A549 (cell line): ENCODE measurements at regions of chr5 and their contacts with region 1.

Region 1: GRCh38 chr5:140346348-140347101 is at the start of gene HBEGF:
- DNase-seq: peak; percentile 69 to 85
- ATAC-seq: peak; percentile 78 to 91
- H3K4me3 ChIP-seq: peak within 1 kb of the TSS; percentile 75
- H3K27ac ChIP-seq: peak within 1 kb of the TSS; percentile 74 to 88
- H3K4me1 ChIP-seq: peaks cover 22% of the 10 kb centered on the region
- CTCF ChIP-seq: no peak; the same call in none of the 3 replicates
- EP300 ChIP-seq: no peak
- POLR2A ChIP-seq: peak; percentile 95
- RAD21 ChIP-seq: no peak; a peak in 2 of 5 replicates
- polyA plus RNA-seq, gene HBEGF: 4.2 and 5.0 TPM in 2 replicates

Region 2: DNA sequence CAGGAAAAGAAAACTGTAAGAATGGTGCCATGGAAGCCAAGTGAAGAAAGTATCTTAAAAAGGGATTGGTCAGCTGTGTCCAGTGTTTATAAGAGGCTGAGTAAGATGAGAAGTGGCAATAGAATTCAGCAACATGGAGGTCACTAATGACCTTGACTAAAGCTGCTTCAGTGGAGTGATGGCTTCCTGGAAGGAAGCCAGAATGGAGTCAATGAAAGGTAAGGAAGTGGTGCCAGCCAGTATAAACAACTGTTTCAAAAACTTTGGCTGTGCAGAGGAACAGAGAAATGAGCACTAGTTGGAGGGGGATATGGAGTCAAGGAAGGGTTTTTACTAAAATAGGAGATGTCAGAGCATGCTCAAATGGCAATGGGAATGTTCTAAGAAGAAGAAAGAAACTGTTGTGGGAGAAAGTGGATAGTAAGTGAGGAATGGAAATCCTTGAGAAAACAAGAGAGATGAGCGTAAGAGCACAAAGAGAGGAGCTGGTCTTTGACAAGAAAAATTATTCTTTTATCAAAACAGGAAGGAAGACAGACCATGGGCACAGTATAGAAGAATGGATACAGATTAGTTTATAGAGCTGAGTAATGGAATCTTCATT is 292.3 kb before region 1 on chr5:
- CTCF ChIA-PET with region 1: no interaction called
- POLR2A ChIA-PET with region 1: no interaction called
- DNase-seq: no peak
- ATAC-seq: no peak
- H3K4me3 ChIP-seq: no peak overlapping the region
- H3K27ac ChIP-seq: no peak overlapping the region
- H3K4me1 ChIP-seq: no peaks in the 10 kb centered on the region
- CTCF ChIP-seq: no peak
- EP300 ChIP-seq: no peak
- POLR2A ChIP-seq: no peak
- RAD21 ChIP-seq: no peak

Region 3: DNA sequence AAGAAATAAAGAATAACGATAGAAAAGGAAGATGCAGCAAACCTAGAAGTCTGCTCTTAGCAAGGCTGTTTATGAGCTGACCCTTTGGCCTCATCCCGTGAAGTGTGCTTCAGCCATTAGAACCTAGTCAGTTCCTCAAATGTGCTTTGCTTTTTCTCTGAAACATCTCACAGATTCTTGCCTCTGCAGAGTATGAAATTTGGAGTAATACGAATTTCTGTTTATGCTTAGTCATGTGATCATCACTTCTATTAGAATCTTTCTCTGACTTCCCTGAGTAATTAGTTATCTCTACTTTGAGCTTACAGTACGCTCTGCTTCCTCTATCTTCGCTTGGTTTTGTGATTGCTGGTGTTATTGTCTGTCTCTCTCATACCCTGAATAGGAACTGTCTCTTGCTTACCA is 160.3 kb before region 1 on chr5:
- CTCF ChIA-PET with region 1: no interaction called
- POLR2A ChIA-PET with region 1: no interaction called
- DNase-seq: no peak
- ATAC-seq: no peak
- H3K4me3 ChIP-seq: no peak overlapping the region
- H3K27ac ChIP-seq: no peak overlapping the region
- H3K4me1 ChIP-seq: peaks cover 29% of the 10 kb centered on the region
- CTCF ChIP-seq: no peak
- EP300 ChIP-seq: no peak
- POLR2A ChIP-seq: no peak
- RAD21 ChIP-seq: no peak

Region 4: GRCh38 chr5:140244525-140245025 is 102.0 kb before region 1 on chr5:
- CTCF ChIA-PET with region 1: interaction called, 1,613 read pairs
- POLR2A ChIA-PET with region 1: interaction called, 46 read pairs
- DNase-seq: peak; percentile 69 to 87
- ATAC-seq: peak; percentile 62 to 82
- H3K4me3 ChIP-seq: no peak overlapping the region
- H3K27ac ChIP-seq: no peak overlapping the region
- H3K4me1 ChIP-seq: peaks cover 29% of the 10 kb centered on the region
- CTCF ChIP-seq: peak; percentile 88
- EP300 ChIP-seq: no peak
- POLR2A ChIP-seq: no peak
- RAD21 ChIP-seq: peak; percentile 95 to 97

Region 5: GRCh38 chr5:140261403-140262171 is 84.9 kb before region 1 on chr5:
- CTCF ChIA-PET with region 1: interaction called, 1,613 read pairs
- POLR2A ChIA-PET with region 1: interaction called, 21 read pairs
- DNase-seq: peak; percentile 83 to 93
- ATAC-seq: peak; percentile 98
- H3K4me3 ChIP-seq: peak overlapping the region; percentile 26
- H3K27ac ChIP-seq: peak overlapping the region; percentile 39 to 54; a peak in 2 of 6 replicates
- H3K4me1 ChIP-seq: peaks cover 17% of the 10 kb centered on the region
- CTCF ChIP-seq: no peak
- EP300 ChIP-seq: no peak
- POLR2A ChIP-seq: no peak
- RAD21 ChIP-seq: 0 out of 5 replicates have a peak, but pooled peaks have one; percentile 2 to 20

Region 6: GRCh38 chr5:140302786-140303639 is 43.5 kb before region 1 on chr5 and contains the start of gene PFDN1:
- CTCF ChIA-PET with region 1: interaction called, 21 read pairs
- POLR2A ChIA-PET with region 1: interaction called, 16 read pairs
- DNase-seq: peak; percentile 95
- ATAC-seq: peak; percentile 95 to 97
- H3K4me3 ChIP-seq: peak within 1 kb of the TSS; percentile 97
- H3K27ac ChIP-seq: peak within 1 kb of the TSS; percentile 90 to 93
- H3K4me1 ChIP-seq: peaks cover 35% of the 10 kb centered on the region
- CTCF ChIP-seq: no peak
- EP300 ChIP-seq: no peak
- POLR2A ChIP-seq: peak; percentile 44
- RAD21 ChIP-seq: no peak
- polyA plus RNA-seq, gene PFDN1: 90.4 and 97.0 TPM in 2 replicates

Region 7: GRCh38 chr5:140317859-140318258 is 28.7 kb before region 1 on chr5:
- CTCF ChIA-PET with region 1: interaction called, 29 read pairs
- POLR2A ChIA-PET with region 1: interaction called, 13 read pairs
- DNase-seq: peak in 1 of 2 experiments; percentile 70
- ATAC-seq: peak; percentile 81 to 87
- H3K4me3 ChIP-seq: no peak overlapping the region
- H3K27ac ChIP-seq: peak overlapping the region; percentile 52 to 67
- H3K4me1 ChIP-seq: peaks cover 29% of the 10 kb centered on the region
- CTCF ChIP-seq: no peak
- EP300 ChIP-seq: no peak
- POLR2A ChIP-seq: no peak
- RAD21 ChIP-seq: no peak

Region 8: DNA sequence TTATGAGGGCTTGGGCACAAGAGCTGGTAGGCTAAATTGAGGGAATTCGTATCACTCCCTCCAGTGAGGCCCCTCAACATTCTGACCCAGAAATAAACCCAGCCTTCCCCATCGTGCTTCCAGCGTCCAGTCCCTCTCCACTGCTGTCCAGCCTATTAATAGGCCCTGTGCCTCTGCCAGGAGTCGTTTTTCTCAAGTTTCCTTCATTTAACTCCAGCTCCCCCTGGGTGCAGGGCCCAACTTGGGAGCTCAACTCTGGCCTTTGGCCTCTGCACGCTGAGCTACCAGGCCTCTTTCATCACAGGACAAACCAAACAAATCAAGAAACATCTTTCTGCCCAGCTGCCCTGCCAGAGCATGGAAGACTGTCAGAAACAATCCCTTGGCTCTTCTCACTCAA is 10.1 kb before region 1 on chr5:
- CTCF ChIA-PET with region 1: interaction called, 61 read pairs
- POLR2A ChIA-PET with region 1: interaction called, 15 read pairs
- DNase-seq: no peak
- ATAC-seq: no peak
- H3K4me3 ChIP-seq: no peak overlapping the region
- H3K27ac ChIP-seq: no peak overlapping the region
- H3K4me1 ChIP-seq: peaks cover 6% of the 10 kb centered on the region; the same call in 2 of the 3 replicates
- CTCF ChIP-seq: no peak
- EP300 ChIP-seq: no peak
- POLR2A ChIP-seq: no peak
- RAD21 ChIP-seq: no peak

Region 9: DNA sequence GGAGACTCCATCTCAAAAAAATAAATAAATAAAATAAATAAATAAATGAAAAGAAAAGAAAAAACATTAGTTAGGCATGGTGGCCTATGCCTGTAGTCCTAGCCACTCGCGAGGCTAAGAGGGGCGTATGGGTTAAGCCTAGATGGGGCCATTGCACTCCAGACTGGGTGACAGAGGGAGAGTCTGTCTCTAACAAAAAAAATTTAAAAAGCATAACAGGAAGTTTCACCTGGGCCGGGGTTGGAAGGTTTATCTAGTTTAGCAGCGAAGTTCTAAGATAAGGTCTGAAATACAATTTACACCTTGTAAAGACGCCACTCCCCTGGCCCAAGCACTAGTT is 371.7 kb after region 1 on chr5:
- CTCF ChIA-PET with region 1: interaction called, 13 read pairs
- POLR2A ChIA-PET with region 1: interaction called, 8 read pairs
- DNase-seq: no peak
- ATAC-seq: peak; percentile 18 to 47
- H3K4me3 ChIP-seq: peak overlapping the region; percentile 44
- H3K27ac ChIP-seq: peak overlapping the region; percentile 84 to 92
- H3K4me1 ChIP-seq: no peaks in the 10 kb centered on the region
- CTCF ChIP-seq: no peak
- EP300 ChIP-seq: no peak
- POLR2A ChIP-seq: no peak
- RAD21 ChIP-seq: no peak